Aorta (tissue), 5 donors: ENCODE measurements at regions of chr11 and their contacts with region 1.

Region 1: DNA sequence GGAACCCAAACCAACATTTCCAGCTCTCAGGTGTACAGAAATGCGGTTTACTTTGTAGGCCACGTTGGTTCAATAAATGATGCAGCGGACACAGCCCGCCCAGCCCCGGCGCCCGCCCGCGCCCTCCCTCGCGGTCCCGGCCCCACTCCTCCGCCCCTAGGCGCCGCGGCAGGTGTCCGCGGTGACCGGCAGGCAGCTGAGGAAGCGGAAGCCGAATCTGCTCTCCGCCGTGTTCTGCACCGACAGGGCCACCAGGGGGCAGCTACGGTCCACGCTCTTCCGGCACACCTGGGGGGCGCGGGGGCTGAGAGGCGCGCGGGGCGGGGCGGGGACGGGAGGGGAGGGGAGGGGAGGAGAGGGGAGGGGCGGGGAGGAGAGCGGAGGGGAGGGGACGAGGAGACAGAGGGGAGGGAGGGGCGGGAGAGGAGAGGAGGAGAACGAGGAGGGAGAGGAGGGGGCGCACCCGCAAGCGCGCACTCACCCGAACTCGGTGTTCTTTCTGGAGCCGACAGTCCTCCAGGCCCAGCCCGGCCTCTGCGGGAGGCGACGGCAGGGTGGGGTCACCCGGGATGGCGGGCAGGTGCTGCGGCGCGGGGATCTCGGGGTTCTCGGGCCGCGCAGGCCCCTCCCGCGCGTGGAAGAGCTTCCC is 5.6 kb downstream of the LMNTD2 start:
- DNase-seq: peak in 1 of 2 donors; percentile 88
- ATAC-seq: peak; percentile 61
- H3K4me3 ChIP-seq: no peak overlapping the region
- H3K27ac ChIP-seq: no peak overlapping the region
- H3K4me1 ChIP-seq: no peaks in the 10 kb centered on the region
- H3K27me3 ChIP-seq: no peaks in the 10 kb centered on the region

Region 2: GRCh38 chr11:777288-778255 is 222.6 kb after region 1 on chr11 and contains the start of gene GATD1:
- intact Hi-C with region 1: loop called in 1 of 2 experiments (anchors 10 kb)
- DNase-seq: peak; percentile 95 to 98
- ATAC-seq: peak; percentile 92
- H3K4me3 ChIP-seq: peak within 1 kb of the TSS; percentile 62 to 69
- H3K27ac ChIP-seq: peak within 1 kb of the TSS in 1 of 2 donors; percentile 13
- H3K4me1 ChIP-seq: no peaks in the 10 kb centered on the region
- H3K27me3 ChIP-seq: no peaks in the 10 kb centered on the region
- total RNA-seq, gene GATD1: 36.1 to 52.7 TPM